Right ventricle myocardium superior (tissue), 1 donor: ENCODE measurements at regions of chr4 and their contacts with region 1.

Region 1: GRCh38 chr4:164731827-164732474 is 22.0 kb upstream of the SMIM31 start:
- DNase-seq: no peak
- ATAC-seq: peak; percentile 86

Region 2: DNA sequence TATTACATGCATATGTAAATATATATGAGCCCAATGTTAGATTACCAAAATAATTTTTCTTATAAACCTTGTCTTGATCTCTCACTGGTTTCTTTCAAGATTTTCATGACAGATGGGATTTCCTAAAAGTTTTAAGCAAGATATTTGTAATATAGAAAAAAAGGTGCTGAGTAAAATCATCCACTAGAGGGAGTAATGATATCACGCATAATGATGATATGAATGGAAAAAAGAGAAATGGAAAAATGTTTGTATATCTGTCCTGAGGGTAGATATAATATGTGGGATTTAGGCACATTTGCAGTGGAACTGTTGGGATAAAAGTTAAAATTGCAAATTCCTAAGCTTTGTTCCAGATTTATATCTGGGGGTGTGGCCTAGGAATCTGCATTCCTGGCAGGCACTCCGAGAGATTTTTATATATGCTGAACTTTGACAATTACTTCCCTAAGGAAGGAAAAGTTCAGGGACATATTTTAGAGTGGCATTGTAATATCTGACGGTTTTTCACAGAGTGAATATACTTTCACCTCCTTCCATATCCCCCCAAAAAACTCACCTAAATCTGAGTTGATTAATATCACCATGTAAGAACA is 1177.0 kb before region 1 on chr4:
- intact Hi-C with region 1: loop called (anchors 5 kb)
- DNase-seq: no peak
- ATAC-seq: no peak

Region 3: DNA sequence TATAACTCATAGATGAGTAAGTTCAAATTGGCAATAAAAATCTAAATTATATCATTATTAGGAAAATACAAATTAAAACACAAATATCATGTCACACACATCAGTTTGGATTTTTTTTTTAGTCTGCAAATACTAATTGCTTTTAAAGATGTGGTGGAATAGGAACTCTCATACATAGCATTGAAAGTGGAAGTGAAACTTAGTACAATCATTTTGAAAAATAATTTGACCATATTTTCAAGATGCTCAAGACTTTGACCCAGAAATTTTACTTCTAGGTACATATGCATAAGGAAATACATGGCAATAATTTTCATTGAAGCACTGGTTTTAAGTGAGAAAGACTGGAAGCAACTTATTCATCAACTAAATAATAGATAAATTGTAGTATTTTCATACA is 125.5 kb before region 1 on chr4:
- intact Hi-C with region 1: no loop called
- DNase-seq: no peak
- ATAC-seq: no peak